ENCODE measurements at regions of chr3 and their contacts with region 1.

Region 1: GRCh38 chr3:9362731-9363530 is at the start of gene THUMPD3:
- DNase-seq: peak; percentile 95
- ATAC-seq: peak; percentile 94
- H3K4me3 Mint-ChIP-seq: peak within 1 kb of the TSS; percentile 93
- H3K27ac Mint-ChIP-seq: peak within 1 kb of the TSS; percentile 99
- H3K4me1 Mint-ChIP-seq: peaks cover 30% of the 10 kb centered on the region
- H3K27me3 Mint-ChIP-seq: no peaks in the 10 kb centered on the region
- CTCF ChIP-seq: no peak
- total RNA-seq, gene THUMPD3: 62.9 to 66.3 TPM

Region 2: DNA sequence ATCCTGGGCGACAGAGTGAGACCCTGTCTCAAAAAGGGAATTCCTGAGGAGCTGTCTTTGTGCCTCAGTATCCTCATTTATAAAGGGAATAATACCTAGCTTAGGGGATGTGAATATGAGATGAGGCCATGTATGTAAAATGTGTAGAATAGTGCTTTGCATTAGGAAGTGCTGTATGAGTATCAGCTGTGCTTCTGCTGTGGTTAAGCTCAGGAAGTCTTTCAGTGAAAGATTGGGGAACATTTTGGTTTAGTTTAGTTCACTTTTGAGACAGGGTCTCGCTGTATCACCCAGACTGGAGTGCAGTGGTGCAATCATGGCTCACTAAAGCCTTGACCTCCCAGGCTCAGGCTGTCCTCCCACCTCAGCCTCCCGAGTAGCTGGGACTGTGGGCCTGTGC is 10.5 kb after region 1 on chr3:
- CTCF ChIA-PET with region 1: interaction called, 3 read pairs
- POLR2A ChIA-PET with region 1: interaction called, 14 read pairs
- intact Hi-C with region 1: no loop called
- DNase-seq: no peak
- ATAC-seq: peak; percentile 24
- H3K4me3 Mint-ChIP-seq: no peak overlapping the region
- H3K27ac Mint-ChIP-seq: peak overlapping the region; percentile 62
- H3K4me1 Mint-ChIP-seq: peaks cover 40% of the 10 kb centered on the region
- H3K27me3 Mint-ChIP-seq: no peaks in the 10 kb centered on the region
- CTCF ChIP-seq: no peak

Measured in activated CD8-positive, alpha-beta T cell treated with anti-CD3 and anti-CD28 coated beads for 36 hours (primary cell).